GM18951 (cell line): ENCODE measurements at regions of chr3 and their contacts with region 1.

Region 1: DNA sequence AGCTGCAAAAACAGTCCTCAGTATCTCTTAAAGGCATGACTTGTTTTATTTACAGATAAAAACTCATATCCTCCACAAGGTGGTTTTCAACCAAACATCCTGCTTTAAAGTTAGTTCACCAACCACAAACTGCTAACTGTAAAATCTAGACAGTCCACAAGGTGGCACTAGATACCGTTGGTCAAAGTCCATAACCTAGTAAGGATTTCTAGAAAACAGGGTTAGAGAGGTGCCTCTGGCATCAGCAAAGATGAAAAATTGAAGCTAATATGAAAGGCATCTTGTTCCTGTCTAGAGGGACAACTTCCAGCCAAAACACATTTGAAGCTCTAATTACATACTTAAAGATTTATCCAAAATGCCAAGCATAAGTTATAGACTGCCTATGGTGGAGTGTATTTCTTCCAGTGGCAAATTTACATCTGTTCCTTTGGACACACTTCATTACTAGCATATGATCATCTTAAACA is 56.0 kb downstream of the ZMAT3 start:
- POLR2A ChIP-seq: no peak

Region 2: DNA sequence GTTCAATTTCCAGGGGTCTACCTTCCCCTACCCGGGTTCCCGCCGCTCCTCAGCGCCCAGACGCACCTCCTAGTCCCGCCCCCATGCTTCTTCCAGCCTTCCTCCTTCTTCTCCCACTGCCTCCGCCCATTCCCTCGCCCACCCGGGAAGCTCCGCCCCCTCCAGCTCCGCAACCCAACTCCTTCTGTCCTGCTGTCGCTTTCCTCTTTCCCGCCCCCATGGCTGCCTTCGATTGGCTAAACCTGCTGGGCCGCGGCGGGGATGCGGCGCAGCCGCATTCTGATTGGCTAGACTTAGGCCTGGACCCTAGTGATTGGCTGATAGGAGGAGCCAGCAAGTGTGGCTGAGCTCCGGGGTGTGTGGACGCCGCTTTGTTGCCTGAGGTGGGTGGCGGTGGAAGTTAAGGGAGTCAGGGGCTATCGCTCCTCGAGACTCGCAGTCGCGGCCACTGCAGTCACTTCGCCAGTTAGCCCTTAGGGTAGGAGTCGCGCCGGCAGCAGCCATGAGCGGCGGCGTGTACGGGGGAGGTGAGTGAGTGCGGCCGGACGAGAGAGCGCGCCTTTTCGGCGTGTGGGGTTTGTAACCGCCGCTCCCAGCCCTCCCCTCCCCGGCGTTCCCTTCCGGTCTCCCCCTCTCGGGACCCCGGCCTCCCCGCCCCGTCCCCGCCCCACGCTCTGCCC is 547.1 kb after region 1 on chr3 and contains the start of gene ACTL6A:
- in situ Hi-C with region 1: loop called (anchors 25 kb)
- POLR2A ChIP-seq: peak; percentile 87

Region 3: DNA sequence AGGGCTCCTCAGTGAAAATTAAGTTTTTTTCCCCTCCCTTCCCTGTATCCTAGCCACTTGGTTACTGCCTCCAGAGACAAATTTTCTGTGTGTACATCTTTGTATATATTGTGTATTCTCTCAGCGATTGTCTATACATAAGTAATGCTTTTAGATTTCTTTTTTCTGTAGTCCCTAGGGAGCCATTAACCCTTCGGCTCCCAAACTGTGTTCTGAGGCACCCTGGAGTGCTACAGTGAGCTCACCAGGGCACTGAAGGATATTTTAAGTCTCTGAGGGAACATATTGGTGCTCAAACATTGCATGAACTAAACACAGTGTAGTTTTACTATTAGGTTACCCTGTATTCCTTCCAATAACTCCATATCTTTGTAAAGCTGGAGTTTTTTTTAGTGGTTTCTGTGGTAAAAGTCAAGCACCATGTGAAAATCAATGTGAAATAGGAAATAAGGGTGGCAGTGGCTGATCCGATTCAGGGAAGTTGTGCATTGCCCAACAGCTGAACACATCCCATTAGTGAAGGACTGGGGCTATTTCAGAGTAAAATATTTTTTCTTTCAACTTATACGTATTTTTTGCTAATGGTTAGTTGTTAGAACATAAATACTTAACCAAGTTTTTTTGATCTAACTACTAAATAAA is 680.2 kb after region 1 on chr3:
- in situ Hi-C with region 1: no loop called
- POLR2A ChIP-seq: no peak